PC-9 (cell line): ENCODE measurements at regions of chr7 and their contacts with region 1.

Region 1: GRCh38 chr7:94657771-94658693 is 2.1 kb upstream of the SGCE start:
- DNase-seq: peak; percentile 82 to 86
- H3K4me3 ChIP-seq: no peak overlapping the region
- H3K27ac ChIP-seq: no peak overlapping the region
- H3K4me1 ChIP-seq: peaks cover 17% of the 10 kb centered on the region
- H3K27me3 ChIP-seq: no peaks in the 10 kb centered on the region
- CTCF ChIP-seq: no peak

Region 2: DNA sequence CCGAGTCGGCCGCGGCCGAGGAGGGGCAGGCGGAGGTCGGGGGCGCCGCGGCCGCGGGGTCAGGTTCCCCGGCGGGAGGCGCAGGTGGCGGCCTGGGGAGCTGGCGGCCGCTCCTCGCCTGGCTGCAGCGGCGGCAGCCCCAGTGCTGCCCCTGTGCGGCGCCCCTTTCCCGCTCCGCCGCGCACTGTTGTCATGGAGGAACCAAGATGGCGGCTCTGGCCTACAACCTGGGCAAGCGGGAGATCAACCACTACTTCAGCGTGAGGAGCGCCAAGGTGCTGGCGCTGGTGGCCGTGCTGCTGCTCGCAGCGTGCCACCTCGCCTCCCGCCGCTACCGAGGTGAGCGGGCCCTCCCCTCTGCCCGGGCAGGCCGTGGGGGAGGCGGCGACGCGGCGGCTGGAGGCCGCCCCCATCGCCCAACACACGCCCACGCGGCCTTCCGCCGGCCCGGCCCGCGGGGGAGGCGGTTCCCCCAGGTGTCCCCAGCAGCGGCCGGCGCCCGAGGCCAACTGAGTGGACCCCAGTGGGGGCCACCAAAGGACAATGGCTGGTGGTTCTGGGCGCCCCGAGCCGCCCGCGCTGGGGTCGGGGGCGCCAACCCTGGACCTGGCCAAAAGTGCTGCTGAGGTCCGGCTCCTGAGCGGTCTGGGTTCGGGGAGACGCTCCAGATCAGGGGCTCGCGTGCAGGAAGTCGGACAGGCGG is 148.0 kb before region 1 on chr7:
- CTCF ChIA-PET with region 1: no interaction called
- POLR2A ChIA-PET with region 1: interaction called, 3 read pairs
- intact Hi-C with region 1: loop called (anchors 2 kb)
- DNase-seq: peak; percentile 58 to 75
- H3K4me3 ChIP-seq: peak overlapping the region; percentile 81
- H3K27ac ChIP-seq: peak overlapping the region; percentile 69
- H3K4me1 ChIP-seq: peaks cover 33% of the 10 kb centered on the region
- H3K27me3 ChIP-seq: no peaks in the 10 kb centered on the region
- CTCF ChIP-seq: no peak

Region 3: DNA sequence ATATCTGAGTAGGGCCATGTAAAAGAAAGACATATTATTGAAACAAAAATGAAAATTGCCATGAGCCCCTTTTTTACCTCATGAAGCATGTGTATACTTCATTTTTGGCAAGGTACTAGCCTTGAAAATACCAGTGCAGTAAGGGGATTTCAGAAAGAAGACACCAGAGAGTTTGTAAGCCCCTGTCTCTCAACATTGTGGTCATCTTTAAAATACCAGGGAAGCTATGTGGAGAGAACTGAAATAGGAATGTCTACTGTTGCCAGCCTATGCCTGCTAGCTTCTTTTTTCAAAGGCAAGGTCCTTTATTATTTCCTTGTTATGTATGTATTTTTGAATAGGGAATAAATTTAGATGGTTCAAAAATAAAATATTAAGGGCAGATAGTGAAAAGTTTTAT is 90.6 kb before region 1 on chr7:
- CTCF ChIA-PET with region 1: no interaction called
- POLR2A ChIA-PET with region 1: no interaction called
- intact Hi-C with region 1: no loop called
- DNase-seq: no peak
- H3K4me3 ChIP-seq: no peak overlapping the region
- H3K27ac ChIP-seq: no peak overlapping the region
- H3K4me1 ChIP-seq: no peaks in the 10 kb centered on the region
- H3K27me3 ChIP-seq: no peaks in the 10 kb centered on the region
- CTCF ChIP-seq: no peak

Region 4: DNA sequence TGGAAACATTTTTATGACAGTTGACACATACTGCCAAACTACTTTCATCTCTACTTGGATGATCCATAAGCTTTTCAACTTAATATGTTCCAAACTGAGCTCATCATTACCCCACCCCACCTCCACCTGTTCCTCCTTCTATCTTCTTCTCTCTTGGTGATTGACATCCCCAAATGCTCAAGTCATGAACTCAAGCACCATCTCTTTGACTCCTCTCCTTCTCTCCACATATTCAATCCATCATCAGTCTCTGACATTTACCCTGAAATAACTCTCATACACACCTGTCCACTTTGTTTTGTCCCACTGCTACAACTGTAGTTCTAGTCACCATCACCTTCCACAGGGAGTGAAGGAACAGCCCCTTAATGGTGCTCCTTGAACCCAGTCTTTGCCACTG is 45.4 kb before region 1 on chr7:
- CTCF ChIA-PET with region 1: no interaction called
- POLR2A ChIA-PET with region 1: no interaction called
- intact Hi-C with region 1: no loop called
- DNase-seq: no peak
- H3K4me3 ChIP-seq: no peak overlapping the region
- H3K27ac ChIP-seq: no peak overlapping the region
- H3K4me1 ChIP-seq: no peaks in the 10 kb centered on the region
- H3K27me3 ChIP-seq: no peaks in the 10 kb centered on the region
- CTCF ChIP-seq: no peak

Region 5: DNA sequence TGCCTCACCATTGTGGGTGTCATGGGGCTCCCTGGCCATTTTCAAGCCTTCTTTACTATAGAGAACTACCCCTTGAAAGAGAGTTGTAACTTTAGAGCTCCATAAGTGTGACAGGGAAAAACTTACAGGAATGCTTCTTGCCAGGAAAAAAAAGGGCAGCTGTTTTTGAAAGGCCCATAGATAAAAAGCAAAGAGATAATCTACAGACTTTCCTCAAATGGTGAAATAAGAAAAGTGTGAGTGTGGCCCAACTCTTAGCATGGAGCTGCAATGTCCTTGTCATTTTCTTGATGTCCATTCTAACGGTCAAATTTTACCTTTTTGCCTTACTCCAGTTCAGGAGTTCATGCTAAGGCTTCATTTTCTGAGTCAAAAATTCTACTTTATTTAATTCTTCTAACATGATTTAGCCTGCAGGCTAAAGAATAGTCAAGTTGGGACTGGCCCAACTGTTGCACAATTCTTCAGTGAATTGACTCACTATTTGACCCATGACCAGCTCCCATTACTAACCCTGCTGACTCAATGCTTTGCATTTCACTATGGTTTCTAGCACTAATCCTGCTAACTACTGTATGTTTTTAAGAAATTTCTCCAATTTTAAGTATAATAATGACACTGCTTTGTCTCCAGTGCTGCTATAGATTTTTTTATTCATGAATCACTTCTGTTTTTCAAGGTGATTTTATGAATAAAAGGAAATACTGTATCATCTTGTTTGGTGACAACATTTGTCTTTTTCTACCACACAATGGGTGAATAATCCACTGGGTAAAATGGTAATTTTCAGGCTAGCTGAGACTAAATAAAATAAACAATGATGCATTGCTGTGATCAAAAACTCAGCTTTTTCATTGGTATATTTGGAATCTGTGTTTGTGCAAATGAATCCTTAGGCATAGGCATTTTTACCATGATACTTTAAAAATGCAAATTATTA is 39.3 kb after region 1 on chr7:
- CTCF ChIA-PET with region 1: no interaction called
- POLR2A ChIA-PET with region 1: no interaction called
- intact Hi-C with region 1: loop called (anchors 5 kb)
- DNase-seq: peak; percentile 64 to 76
- H3K4me3 ChIP-seq: peak overlapping the region; percentile 28; the same call in 1 of the 2 replicates
- H3K27ac ChIP-seq: peak overlapping the region; percentile 80
- H3K4me1 ChIP-seq: peaks cover 40% of the 10 kb centered on the region
- H3K27me3 ChIP-seq: no peaks in the 10 kb centered on the region
- CTCF ChIP-seq: no peak

Region 6: GRCh38 chr7:95199779-95200558 is 541.9 kb after region 1 on chr7:
- CTCF ChIA-PET with region 1: interaction called, 3 read pairs
- POLR2A ChIA-PET with region 1: no interaction called
- intact Hi-C with region 1: loop called (anchors 5 kb)
- DNase-seq: peak in 1 of 2 experiments; percentile 33
- H3K4me3 ChIP-seq: no peak overlapping the region
- H3K27ac ChIP-seq: no peak overlapping the region
- H3K4me1 ChIP-seq: no peaks in the 10 kb centered on the region
- H3K27me3 ChIP-seq: no peaks in the 10 kb centered on the region
- CTCF ChIP-seq: peak; percentile 74